ENCODE measurements at regions of chr12 and their contacts with region 1.

Region 1: GRCh38 chr12:14769969-14770495 is 33.2 kb downstream of the WBP11 start:
- DNase-seq: peak; percentile 79 to 91 (median 81)
- ATAC-seq: peak; percentile 53 to 67 (median 66)
- H3K4me3 ChIP-seq: peak overlapping the region; percentile 57 to 90 (median 84)
- H3K27ac ChIP-seq: peak overlapping the region; percentile 85 to 99 (median 96)
- H3K4me1 ChIP-seq: peaks cover 0 to 30% (median 10%) of the 10 kb centered on the region in 12 donors
- H3K27me3 ChIP-seq: no peaks in the 10 kb centered on the region
- CTCF ChIP-seq: peak; percentile 59 to 86 (median 70)
- POLR2A ChIP-seq: peak in 1 of 2 donors; percentile 28

Region 2: GRCh38 chr12:14257734-14258574 is 512.1 kb before region 1 on chr12:
- intact Hi-C with region 1: loop called in 1 of 10 experiments (anchors 10 kb)
- DNase-seq: peak in 4 of 5 donors; percentile 94 to 97 (median 94)
- ATAC-seq: peak; percentile 82 to 87 (median 85)
- H3K4me3 ChIP-seq: peak overlapping the region in 8 of 12 donors; percentile 8 to 38 (median 26)
- H3K27ac ChIP-seq: peak overlapping the region; percentile 85 to 98 (median 88)
- H3K4me1 ChIP-seq: peaks cover 4 to 80% (median 46%) of the 10 kb centered on the region in 12 donors
- H3K27me3 ChIP-seq: peaks cover 0 to 3% (median 0%) of the 10 kb centered on the region in 9 donors
- CTCF ChIP-seq: peak in 1 of 12 donors; percentile 8
- POLR2A ChIP-seq: peak in 1 of 2 donors; percentile 53

Region 3: GRCh38 chr12:14384783-14385638 is 385.0 kb before region 1 on chr12:
- intact Hi-C with region 1: loop called in 1 of 10 experiments (anchors 10 kb)
- DNase-seq: peak in 4 of 5 donors; percentile 43 to 64 (median 50)
- ATAC-seq: peak; percentile 95 to 97 (median 96)
- H3K4me3 ChIP-seq: peak overlapping the region; percentile 3 to 54 (median 42)
- H3K27ac ChIP-seq: peak overlapping the region; percentile 61 to 84 (median 79)
- H3K4me1 ChIP-seq: peaks cover 0 to 60% (median 17%) of the 10 kb centered on the region in 12 donors
- H3K27me3 ChIP-seq: no peaks in the 10 kb centered on the region
- CTCF ChIP-seq: no peak
- POLR2A ChIP-seq: peak in 1 of 2 donors; percentile 21

Region 4: GRCh38 chr12:14803011-14803829 is 33.2 kb after region 1 on chr12 and contains the starts of genes C12orf60 and WBP11:
- intact Hi-C with region 1: loop called in 4 of 10 experiments (anchors 1 to 2 kb)
- DNase-seq: peak; percentile 92 to 97 (median 95)
- ATAC-seq: peak; percentile 100
- H3K4me3 ChIP-seq: peak within 1 kb of the TSS; percentile 74 to 95 (median 82)
- H3K27ac ChIP-seq: peak within 1 kb of the TSS; percentile 52 to 95 (median 88)
- H3K4me1 ChIP-seq: peaks cover 0 to 33% (median 17%) of the 10 kb centered on the region in 12 donors
- H3K27me3 ChIP-seq: no peaks in the 10 kb centered on the region
- CTCF ChIP-seq: no peak
- POLR2A ChIP-seq: peak; percentile 28 to 90
- total RNA-seq, gene C12orf60: 2.0 to 4.6 (median 3.4) TPM
- total RNA-seq, gene WBP11: 20.2 to 62.7 (median 52.7) TPM

Region 5: DNA sequence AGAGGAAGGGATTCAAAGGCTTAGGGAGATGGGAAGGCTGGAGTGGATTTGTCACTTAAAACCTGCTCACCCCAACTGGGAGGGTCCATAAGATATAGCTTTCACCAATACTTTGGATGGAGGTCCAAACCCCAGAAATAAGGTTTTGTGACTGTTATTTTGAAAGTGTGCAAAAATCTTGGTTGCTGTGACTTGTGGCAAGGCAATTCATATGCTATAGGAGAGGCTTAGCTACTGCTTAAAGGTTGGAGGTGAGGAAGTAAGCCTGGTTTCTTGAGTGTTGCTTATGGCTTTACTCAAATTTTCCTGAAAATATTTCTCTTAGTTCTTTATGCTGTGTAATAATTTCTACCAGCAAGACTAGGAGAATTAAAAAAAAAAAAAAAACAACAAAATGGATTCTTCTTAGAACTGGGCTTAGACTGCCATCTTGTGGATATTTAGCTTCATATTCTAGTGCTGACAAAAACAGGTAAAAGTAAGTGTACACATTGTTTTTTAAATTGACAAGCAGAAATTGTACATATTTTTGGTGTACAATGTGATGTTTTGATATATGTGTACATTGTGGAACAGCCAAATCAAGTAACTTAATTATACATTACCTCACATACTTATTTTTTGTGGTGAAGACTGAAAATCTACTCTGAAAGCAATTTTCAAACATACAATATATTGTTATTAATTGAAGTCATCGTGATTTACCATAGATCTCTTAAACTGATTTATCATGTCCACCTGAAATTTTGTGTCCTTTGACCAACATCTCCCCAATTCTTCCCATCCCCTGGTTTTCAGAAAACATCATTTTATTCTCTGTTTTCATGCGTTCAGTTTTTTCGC is 225.8 kb after region 1 on chr12:
- intact Hi-C with region 1: loop called in 1 of 10 experiments (anchors 5 kb)
- DNase-seq: no peak
- ATAC-seq: peak in 2 of 4 donors; percentile 47 to 55
- H3K4me3 ChIP-seq: no peak overlapping the region
- H3K27ac ChIP-seq: peak overlapping the region in 1 of 12 donors; percentile 6
- H3K4me1 ChIP-seq: peaks cover 0 to 22% (median 1%) of the 10 kb centered on the region in 12 donors
- H3K27me3 ChIP-seq: no peaks in the 10 kb centered on the region
- CTCF ChIP-seq: peak; percentile 62 to 88 (median 72)
- POLR2A ChIP-seq: no peak

Region 6: DNA sequence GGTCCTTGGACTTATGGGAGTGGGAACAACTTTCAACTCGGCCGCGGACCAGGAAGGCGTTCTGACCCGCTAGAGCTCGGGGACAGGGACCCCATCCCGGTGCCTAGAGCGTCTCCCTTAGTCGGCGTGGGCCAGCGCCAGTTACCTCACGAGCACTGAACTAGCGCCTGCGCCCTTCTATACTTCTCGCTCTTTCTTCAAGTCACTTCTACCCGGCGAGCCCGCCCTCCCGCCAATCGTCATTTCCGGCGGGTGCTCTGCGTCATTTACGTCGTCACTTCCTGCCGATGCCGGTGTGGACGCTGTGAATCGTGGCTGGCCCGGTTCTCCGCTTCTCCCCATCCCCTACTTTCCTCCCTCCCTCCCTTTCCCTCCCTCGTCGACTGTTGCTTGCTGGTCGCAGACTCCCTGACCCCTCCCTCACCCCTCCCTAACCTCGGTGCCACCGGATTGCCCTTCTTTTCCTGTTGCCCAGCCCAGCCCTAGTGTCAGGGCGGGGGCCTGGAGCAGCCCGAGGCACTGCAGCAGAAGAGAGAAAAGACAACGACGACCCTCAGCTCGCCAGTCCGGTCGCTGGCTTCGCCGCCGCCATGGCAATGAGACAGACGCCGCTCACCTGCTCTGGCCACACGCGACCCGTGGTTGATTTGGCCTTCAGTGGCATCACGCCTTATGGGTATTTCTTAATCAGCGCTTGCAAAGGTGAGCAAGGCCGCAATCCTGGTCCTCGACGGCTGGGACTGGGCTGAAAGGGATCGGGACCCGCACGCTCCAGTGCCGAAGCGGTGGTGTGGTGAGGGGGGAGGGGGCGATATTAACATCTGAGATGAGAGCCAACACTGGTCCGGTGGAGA is 1112.3 kb after region 1 on chr12 and contains the start of gene STRAP:
- intact Hi-C with region 1: loop called in 1 of 10 experiments (anchors 10 kb)
- DNase-seq: peak; percentile 94 to 98 (median 97)
- ATAC-seq: peak; percentile 97 to 98 (median 98)
- H3K4me3 ChIP-seq: peak within 1 kb of the TSS; percentile 46 to 96 (median 82)
- H3K27ac ChIP-seq: peak within 1 kb of the TSS; percentile 90 to 99 (median 98)
- H3K4me1 ChIP-seq: peaks cover 0 to 50% (median 36%) of the 10 kb centered on the region in 12 donors
- H3K27me3 ChIP-seq: no peaks in the 10 kb centered on the region
- CTCF ChIP-seq: no peak
- POLR2A ChIP-seq: peak; percentile 89 to 98
- total RNA-seq, gene STRAP: 61.6 to 176 (median 111) TPM